GM13977 (cell line): ENCODE measurements at regions of chr2 and their contacts with region 1.

Region 1: DNA sequence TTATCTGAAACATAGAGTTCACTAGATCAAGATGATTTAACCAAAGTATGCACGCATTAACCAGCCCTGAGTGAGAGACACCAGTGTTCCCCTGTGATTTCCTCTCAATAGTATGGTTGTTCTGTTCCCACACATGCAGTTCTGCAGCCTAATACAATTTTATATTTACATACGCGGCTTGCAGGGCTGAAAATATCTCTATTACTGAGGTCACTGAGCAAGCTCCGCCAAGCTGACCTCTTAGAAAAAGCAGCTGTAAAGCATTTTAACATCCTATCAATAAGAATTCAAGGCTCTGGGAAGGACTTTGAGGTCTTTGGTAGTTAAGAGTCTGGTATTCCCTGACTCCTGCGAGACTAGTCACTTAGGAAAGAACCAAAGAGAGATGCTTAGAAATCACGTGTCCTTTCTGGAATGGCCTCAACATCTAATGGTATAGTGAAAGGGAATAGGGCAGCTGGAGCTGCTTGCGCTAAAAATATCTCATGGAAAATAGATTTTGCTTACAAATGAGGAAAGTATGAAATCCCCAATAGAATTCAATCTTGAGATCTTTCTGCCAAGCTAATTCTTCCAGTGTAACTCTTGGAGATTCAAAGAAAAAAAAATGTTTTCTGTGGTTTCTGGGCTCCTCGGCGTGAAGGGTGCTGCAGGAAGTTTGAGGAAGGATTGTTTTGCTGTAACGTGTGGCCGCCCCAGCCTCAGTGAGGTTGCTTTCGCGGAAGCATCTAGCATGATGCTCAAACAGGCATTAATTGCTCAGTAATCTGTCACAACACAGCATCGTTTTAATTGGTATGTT is 59.2 kb downstream of the DOCK10 start:
- DNase-seq: peak; percentile 23
- CTCF ChIP-seq: no peak

Region 2: DNA sequence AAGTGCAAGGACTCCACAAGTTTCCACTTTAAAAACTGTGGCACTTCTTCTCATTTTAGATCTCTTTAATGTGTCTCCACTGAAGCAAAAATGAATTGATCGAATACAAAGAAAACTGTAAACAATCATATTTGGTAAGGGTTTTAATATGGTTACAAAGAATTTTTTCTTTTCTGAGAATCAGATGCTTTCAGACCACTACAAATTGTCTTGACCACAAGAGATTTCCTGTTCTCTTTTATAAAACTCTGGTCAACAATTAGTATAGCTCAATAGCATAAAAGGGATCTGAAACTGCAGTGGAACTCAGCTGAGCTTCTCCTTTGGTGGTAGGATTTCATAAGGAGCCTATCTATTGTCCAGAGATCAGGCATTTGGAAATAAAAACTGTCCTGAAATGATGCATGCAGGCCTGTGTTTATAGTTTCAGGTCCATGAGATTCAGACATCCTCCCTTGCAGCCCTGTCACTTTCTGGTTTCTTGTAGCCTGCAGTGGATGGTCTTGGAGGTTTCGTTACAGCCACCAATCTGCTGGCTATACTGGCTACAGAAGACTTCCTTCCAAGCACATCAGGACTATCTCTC is 60.9 kb before region 1 on chr2:
- in situ Hi-C with region 1: loop called (anchors 10 kb)
- DNase-seq: peak; percentile 33
- CTCF ChIP-seq: no peak